ENCODE measurements at regions of chr16 and their contacts with region 1.

Region 1: DNA sequence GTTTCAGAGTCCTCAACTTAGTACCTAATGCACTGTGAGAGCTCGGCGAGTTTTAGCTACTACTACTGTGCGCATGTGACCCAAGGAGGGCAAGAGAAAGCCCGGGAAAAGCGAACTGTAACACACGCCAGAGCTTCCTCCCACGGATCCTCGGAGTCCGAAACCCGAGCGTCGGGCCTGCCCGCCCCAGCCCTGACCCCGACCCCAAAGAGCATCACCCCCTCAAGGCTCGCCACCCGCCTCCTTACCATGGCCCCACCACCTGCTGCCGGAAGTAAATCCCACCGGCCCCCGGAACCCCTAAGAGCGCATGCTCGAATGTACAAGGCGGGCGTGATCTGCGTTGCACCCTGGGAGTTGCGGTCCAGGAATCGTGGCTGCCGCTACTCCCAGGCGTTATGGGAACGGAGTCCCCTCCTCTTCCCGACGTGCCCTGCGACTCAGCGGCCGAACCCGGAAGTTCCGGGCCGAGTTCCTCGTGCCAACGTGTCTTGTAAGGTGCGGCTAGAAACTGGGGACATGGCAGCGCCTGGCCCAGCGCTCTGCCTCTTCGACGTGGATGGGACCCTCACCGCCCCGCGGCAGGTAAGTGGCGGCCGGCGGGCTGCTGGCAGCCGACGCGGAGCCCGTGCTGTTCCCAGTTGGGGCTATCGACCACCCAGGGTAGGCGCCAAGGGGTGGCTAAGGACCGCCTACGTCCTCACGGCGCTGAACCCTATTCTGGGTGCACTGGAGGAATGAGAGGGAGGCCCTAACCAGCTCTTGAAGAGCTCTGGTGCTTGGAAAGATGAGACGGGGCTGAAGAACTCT is at the starts of genes PMM2 and TMEM186:
- DNase-seq: peak; percentile 97 to 99 (median 98)
- H3K4me3 ChIP-seq: peak within 1 kb of the TSS; percentile 68 to 100 (median 99)
- H3K27ac ChIP-seq: peak within 1 kb of the TSS in 53 of 59 donors; percentile 14 to 87 (median 70)
- H3K27me3 ChIP-seq: no peaks in the 10 kb centered on the region
- CTCF ChIP-seq: peak in 31 of 56 donors; percentile 9 to 62 (median 32)
- total RNA-seq, gene PMM2: 9.1 to 27.1 (median 15.3) TPM
- total RNA-seq, gene TMEM186: 6.9 to 15.1 (median 10.2) TPM

Region 2: DNA sequence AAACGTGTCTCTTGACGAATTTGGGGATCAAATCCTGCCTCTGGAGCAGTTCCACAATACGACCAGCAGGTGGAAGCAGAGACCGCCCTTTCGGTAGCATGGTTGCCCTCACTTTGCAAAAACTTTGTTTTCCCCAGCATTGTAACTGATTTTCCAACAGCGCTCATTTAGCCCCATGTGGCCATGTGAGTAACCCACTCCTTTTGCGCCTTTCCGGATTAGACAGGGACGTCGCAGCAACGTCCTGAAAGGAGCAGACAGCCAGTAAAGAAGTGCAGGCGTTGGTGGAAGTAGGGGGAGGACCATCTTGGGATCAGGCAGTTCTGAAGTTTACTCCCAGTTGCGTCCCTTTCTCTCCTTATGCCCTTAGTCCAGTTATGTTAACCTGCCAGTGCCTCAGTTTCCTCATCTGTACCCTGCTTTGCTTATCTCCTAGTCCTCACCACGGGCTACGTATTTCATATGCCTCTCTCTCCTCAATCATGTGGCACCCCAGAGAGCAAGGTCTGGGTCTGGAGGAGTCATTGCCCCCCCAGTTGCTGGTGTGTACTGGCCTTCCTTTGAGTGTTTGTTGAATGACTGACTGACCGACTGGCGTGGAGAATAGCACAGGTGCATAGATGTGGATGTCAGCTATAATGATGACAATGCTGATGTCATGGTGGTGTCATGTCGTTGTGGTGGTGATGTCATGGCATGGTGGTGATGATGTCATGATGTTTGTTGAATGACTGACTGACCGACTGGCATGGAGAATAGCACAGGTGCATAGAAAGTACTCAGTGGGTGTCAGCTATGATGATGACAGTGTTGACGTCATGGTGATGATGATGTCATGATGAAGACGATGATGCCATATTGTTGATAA is 229.6 kb before region 1 on chr16:
- intact Hi-C with region 1: loop called (anchors 2 to 5 kb)
- DNase-seq: peak; percentile 45 to 81 (median 67)
- H3K4me3 ChIP-seq: no peak overlapping the region
- H3K27ac ChIP-seq: no peak overlapping the region
- H3K27me3 ChIP-seq: no peaks in the 10 kb centered on the region
- CTCF ChIP-seq: peak; percentile 97 to 100 (median 99)

Region 3: GRCh38 chr16:8674413-8675022 is 123.1 kb before region 1 on chr16 and contains the start of gene ABAT:
- intact Hi-C with region 1: loop called in 1 of 2 experiments (anchors 5 kb)
- DNase-seq: peak; percentile 86 to 99 (median 92)
- H3K4me3 ChIP-seq: peak within 1 kb of the TSS; percentile 62 to 98 (median 85)
- H3K27ac ChIP-seq: peak within 1 kb of the TSS in 46 of 59 donors; percentile 2 to 85 (median 65)
- H3K27me3 ChIP-seq: no peaks in the 10 kb centered on the region
- CTCF ChIP-seq: peak in 21 of 56 donors; percentile 11 to 39 (median 22)
- total RNA-seq, gene ABAT: 83.4 to 281 (median 204) TPM

Region 4: DNA sequence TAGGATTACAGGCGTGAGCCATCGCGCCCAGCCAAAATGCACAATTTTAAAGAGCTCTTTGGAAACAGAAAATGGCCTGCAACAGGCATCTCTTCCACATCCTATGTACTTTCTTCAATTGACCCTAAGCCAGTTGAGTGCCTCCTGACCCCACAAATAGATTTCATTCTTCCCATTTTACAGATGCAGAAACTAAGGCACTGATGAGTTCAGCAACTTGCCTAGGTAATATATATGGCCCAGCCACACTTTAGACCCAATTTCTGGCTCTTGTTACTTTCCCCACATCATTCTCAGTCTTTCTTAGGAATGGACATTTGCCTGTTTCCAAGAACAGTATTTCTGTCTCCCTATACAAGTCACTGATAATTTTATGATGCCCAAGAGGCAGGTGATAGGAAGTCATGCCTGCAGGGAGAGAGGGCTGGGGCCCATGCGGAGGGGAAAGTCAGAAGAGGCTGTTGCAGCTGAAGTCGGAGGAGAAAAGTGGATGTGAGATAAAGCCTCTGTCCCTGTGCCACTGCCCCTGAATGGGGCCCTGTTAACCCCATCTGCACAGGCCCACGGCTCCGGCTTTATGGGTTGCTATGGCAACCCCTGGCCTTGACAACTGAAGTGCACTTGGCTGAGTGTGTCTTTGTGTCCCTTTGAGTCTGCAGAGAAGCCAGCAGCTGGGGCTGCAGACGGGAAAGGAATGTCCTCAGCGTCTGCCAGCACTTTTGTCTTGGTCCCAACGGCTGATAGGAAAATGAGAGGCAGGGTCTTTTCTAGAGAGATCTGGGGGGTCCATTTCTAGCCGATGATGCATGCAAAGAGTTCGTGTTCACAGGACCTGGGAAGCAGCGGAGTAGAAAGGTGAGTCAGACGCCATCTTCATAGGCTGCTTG is 77.2 kb before region 1 on chr16:
- intact Hi-C with region 1: no loop called
- DNase-seq: peak in 5 of 10 donors; percentile 33 to 51 (median 48)
- H3K4me3 ChIP-seq: peak overlapping the region in 13 of 59 donors; percentile 1 to 38 (median 16)
- H3K27ac ChIP-seq: peak overlapping the region in 13 of 59 donors; percentile 1 to 55 (median 28)
- H3K27me3 ChIP-seq: no peaks in the 10 kb centered on the region
- CTCF ChIP-seq: no peak

Region 5: GRCh38 chr16:8878521-8878911 is 80.9 kb after region 1 on chr16:
- intact Hi-C with region 1: loop called (anchors 2 to 5 kb)
- DNase-seq: no peak
- H3K4me3 ChIP-seq: no peak overlapping the region
- H3K27ac ChIP-seq: no peak overlapping the region
- H3K27me3 ChIP-seq: no peaks in the 10 kb centered on the region
- CTCF ChIP-seq: no peak

Region 6: GRCh38 chr16:9090960-9091866 is 293.6 kb after region 1 on chr16 and contains the start of gene HAPSTR1:
- intact Hi-C with region 1: loop called in 1 of 2 experiments (anchors 5 kb)
- DNase-seq: peak; percentile 99 to 100 (median 100)
- H3K4me3 ChIP-seq: peak within 1 kb of the TSS; percentile 67 to 98 (median 89)
- H3K27ac ChIP-seq: peak within 1 kb of the TSS; percentile 81 to 100 (median 96)
- H3K27me3 ChIP-seq: no peaks in the 10 kb centered on the region
- CTCF ChIP-seq: peak in 4 of 56 donors; percentile 15 to 23 (median 17)
- total RNA-seq, gene HAPSTR1: 60.1 to 117 (median 88.9) TPM

Region 7: GRCh38 chr16:9330095-9330494 is 532.5 kb after region 1 on chr16:
- intact Hi-C with region 1: no loop called
- DNase-seq: no peak
- H3K4me3 ChIP-seq: no peak overlapping the region
- H3K27ac ChIP-seq: peak overlapping the region in 45 of 59 donors; percentile 5 to 73 (median 47)
- H3K27me3 ChIP-seq: no peaks in the 10 kb centered on the region
- CTCF ChIP-seq: no peak

Region 8: DNA sequence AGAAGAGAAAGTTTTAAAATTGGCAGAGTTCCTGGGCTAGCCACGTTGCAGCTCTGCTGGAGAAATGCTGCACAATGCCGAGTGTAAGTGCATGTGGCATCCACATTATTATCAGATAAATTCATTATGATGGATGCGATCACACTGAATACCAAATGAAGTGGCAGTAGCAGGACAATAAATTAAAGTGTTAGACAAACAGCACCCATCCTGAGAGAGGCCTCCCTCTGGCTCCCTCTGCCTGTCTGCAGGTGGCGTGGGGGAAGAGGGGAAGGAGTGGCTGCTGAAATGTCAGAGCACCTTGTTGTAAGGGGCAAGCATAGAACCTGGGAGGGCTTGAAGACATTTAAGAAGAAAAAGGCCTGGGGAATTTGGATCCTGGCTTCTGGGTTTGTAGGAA is 618.0 kb after region 1 on chr16:
- intact Hi-C with region 1: no loop called
- DNase-seq: no peak
- H3K4me3 ChIP-seq: no peak overlapping the region
- H3K27ac ChIP-seq: no peak overlapping the region
- H3K27me3 ChIP-seq: no peaks in the 10 kb centered on the region
- CTCF ChIP-seq: no peak

Measured in dorsolateral prefrontal cortex (tissue), 120 donors.